ENCODE measurements at regions of chr3 and their contacts with region 1.

Region 1: DNA sequence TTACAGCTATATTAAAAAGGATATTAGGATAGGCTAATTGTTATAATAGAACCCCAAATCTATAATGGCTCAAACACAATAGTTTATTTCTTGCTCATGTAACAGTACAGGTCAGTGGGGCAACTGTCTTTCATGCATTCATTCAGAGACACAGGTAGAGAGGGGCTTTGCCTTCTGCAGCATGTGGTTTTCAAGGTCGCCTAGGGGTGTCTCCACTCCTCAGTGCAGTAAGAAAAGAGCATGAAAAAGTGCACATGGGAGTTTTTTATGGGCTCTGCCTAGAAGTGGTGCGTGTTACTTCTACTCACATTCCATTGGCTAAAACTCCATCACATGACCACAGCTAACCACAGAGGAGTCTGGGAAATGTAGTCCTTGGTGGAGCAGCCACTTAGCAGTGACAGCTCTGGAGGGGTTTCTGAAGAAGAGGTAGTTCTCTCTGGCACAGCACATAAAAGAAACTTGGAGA is 1.8 kb downstream of the ZBTB38 start:
- DNase-seq: peak; percentile 96
- ATAC-seq: peak; percentile 87
- H3K4me3 ChIP-seq: no peak overlapping the region
- H3K27ac ChIP-seq: peak overlapping the region; percentile 35
- H3K4me1 ChIP-seq: peaks cover 53% of the 10 kb centered on the region
- H3K27me3 ChIP-seq: no peaks in the 10 kb centered on the region
- CTCF ChIP-seq: peak; percentile 52 to 75 (median 69)
- EP300 ChIP-seq: no peak
- POLR2A ChIP-seq: peak; percentile 53
- RAD21 ChIP-seq: peak; percentile 80

Region 2: GRCh38 chr3:141331377-141332318 is 38.5 kb before region 1 on chr3:
- CTCF ChIA-PET with region 1: interaction called, 6 read pairs
- POLR2A ChIA-PET with region 1: interaction called, 7 read pairs
- RAD21 ChIA-PET with region 1: interaction called, 46 read pairs
- SMC1A ChIA-PET with region 1: interaction called, 43 read pairs
- in situ Hi-C with region 1: no loop called
- intact Hi-C with region 1: loop called (anchors 5 kb)
- DNase-seq: peak; percentile 69
- ATAC-seq: peak; percentile 24
- H3K4me3 ChIP-seq: no peak overlapping the region
- H3K27ac ChIP-seq: peak overlapping the region; percentile 62
- H3K4me1 ChIP-seq: peaks cover 53% of the 10 kb centered on the region
- H3K27me3 ChIP-seq: no peaks in the 10 kb centered on the region
- CTCF ChIP-seq: no peak
- EP300 ChIP-seq: peak in 1 of 2 experiments; percentile 45; a peak in 1 of 4 replicates
- POLR2A ChIP-seq: no peak
- RAD21 ChIP-seq: no peak

Region 3: GRCh38 chr3:141346418-141346817 is 23.7 kb before region 1 on chr3:
- CTCF ChIA-PET with region 1: interaction called, 10 read pairs
- POLR2A ChIA-PET with region 1: interaction called, 6 read pairs
- RAD21 ChIA-PET with region 1: interaction called, 5 read pairs
- SMC1A ChIA-PET with region 1: interaction called, 13 read pairs
- in situ Hi-C with region 1: no loop called
- intact Hi-C with region 1: no loop called
- DNase-seq: no peak
- ATAC-seq: peak; percentile 50
- H3K4me3 ChIP-seq: no peak overlapping the region
- H3K27ac ChIP-seq: no peak overlapping the region
- H3K4me1 ChIP-seq: peaks cover 12% of the 10 kb centered on the region; the same call in 1 of the 2 replicates
- H3K27me3 ChIP-seq: no peaks in the 10 kb centered on the region
- CTCF ChIP-seq: no peak
- EP300 ChIP-seq: no peak
- POLR2A ChIP-seq: no peak
- RAD21 ChIP-seq: no peak

Region 4: DNA sequence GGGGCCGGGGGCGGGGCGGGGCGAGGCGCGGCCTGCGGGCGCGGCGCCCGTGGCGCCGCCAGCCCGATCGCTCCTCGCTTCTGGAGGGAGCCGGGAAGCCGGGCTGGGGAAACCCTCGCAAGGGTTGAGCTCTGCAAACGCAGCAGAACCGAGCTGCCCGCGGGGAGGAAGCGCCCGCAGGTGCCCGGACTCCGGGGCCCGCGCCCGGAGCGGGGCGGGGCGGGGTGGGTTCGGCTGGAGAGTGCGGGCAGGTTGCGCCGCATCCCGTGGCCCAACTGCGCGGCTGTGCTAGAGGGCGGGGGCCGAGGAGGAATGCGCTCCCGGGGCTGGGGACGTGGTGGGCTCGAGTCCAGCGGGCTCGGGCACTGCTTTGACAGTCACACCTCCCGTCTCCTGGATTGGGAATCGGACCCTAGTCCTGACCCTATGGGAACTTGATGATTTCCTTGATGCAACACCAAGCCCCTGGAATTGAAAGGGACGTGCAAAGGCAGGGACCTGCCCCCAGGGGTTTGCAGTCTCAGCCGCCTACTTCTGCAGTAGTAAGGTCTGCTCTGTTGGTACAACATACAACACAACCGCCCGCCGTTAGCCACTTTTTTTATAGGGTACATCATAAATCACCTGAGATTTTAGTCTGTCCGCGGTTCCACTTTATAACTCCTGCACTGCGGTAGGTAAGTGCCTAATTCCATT is 32.5 kb after region 1 on chr3:
- CTCF ChIA-PET with region 1: interaction called, 103 read pairs
- POLR2A ChIA-PET with region 1: interaction called, 453 read pairs
- RAD21 ChIA-PET with region 1: interaction called, 144 read pairs
- SMC1A ChIA-PET with region 1: interaction called, 573 read pairs
- in situ Hi-C with region 1: no loop called
- intact Hi-C with region 1: loop called (anchors 2 kb)
- DNase-seq: no peak
- ATAC-seq: peak; percentile 61
- H3K4me3 ChIP-seq: peak overlapping the region; percentile 72
- H3K27ac ChIP-seq: peak overlapping the region; percentile 92
- H3K4me1 ChIP-seq: peaks cover 29% of the 10 kb centered on the region
- H3K27me3 ChIP-seq: no peaks in the 10 kb centered on the region
- CTCF ChIP-seq: no peak
- EP300 ChIP-seq: no peak
- POLR2A ChIP-seq: peak; percentile 63
- RAD21 ChIP-seq: no peak

Region 5: GRCh38 chr3:141431411-141432378 is 61.6 kb after region 1 on chr3:
- CTCF ChIA-PET with region 1: interaction called, 4 read pairs
- POLR2A ChIA-PET with region 1: interaction called, 6 read pairs
- RAD21 ChIA-PET with region 1: interaction called, 5 read pairs
- SMC1A ChIA-PET with region 1: interaction called, 14 read pairs
- in situ Hi-C with region 1: no loop called
- intact Hi-C with region 1: no loop called
- DNase-seq: no peak
- ATAC-seq: no peak
- H3K4me3 ChIP-seq: no peak overlapping the region
- H3K27ac ChIP-seq: no peak overlapping the region
- H3K4me1 ChIP-seq: peaks cover 5% of the 10 kb centered on the region; the same call in 1 of the 2 replicates
- H3K27me3 ChIP-seq: no peaks in the 10 kb centered on the region
- CTCF ChIP-seq: no peak
- EP300 ChIP-seq: no peak
- POLR2A ChIP-seq: no peak
- RAD21 ChIP-seq: no peak